Activated CD4-positive, alpha-beta memory T cell treated with anti-CD3 and anti-CD28 coated beads, Interleukin-2, amount 10 ng/mL, durations not matched to agents 7 days and 5 days (primary cell): ENCODE measurements at regions of chr21 and their contacts with region 1.

Region 1: DNA sequence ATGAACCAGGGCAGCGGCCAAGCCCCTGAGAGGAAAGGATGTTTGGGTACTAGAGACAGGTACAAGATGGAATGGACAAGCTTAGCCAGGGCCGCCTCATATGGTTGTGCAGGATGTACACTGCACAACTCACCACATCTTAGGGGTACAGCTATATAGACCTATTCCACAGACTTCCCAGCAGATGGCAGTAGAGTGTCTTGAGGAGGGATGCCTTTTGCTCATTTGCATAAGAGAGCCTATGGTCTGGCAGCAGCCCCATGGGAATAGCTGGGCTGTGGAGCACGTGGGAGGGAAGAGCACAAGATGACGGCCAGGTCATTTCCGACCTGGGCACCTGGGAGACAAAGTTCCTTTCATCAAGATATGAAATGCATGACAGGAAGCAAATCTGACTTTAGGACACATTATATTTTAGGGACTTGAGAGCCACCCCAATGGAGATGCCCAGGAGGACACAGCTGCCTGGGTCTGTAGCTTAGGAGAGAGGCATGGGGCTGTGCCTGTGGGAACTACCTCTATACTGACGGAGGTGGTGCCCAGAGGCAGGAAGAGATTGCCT is 215.5 kb downstream of the KCNJ6 start:
- DNase-seq: peak; percentile 16
- H3K4me3 Mint-ChIP-seq: no peak overlapping the region
- H3K27ac Mint-ChIP-seq: no peak overlapping the region
- H3K4me1 Mint-ChIP-seq: no peaks in the 10 kb centered on the region
- H3K27me3 Mint-ChIP-seq: peaks cover 2% of the 10 kb centered on the region

Region 2: GRCh38 chr21:37546949-37547614 is 153.6 kb before region 1 on chr21:
- CTCF ChIA-PET with region 1: no interaction called
- POLR2A ChIA-PET with region 1: no interaction called
- DNase-seq: no peak
- H3K4me3 Mint-ChIP-seq: no peak overlapping the region
- H3K27ac Mint-ChIP-seq: no peak overlapping the region
- H3K4me1 Mint-ChIP-seq: peaks cover 2% of the 10 kb centered on the region
- H3K27me3 Mint-ChIP-seq: peaks cover 18% of the 10 kb centered on the region

Region 3: DNA sequence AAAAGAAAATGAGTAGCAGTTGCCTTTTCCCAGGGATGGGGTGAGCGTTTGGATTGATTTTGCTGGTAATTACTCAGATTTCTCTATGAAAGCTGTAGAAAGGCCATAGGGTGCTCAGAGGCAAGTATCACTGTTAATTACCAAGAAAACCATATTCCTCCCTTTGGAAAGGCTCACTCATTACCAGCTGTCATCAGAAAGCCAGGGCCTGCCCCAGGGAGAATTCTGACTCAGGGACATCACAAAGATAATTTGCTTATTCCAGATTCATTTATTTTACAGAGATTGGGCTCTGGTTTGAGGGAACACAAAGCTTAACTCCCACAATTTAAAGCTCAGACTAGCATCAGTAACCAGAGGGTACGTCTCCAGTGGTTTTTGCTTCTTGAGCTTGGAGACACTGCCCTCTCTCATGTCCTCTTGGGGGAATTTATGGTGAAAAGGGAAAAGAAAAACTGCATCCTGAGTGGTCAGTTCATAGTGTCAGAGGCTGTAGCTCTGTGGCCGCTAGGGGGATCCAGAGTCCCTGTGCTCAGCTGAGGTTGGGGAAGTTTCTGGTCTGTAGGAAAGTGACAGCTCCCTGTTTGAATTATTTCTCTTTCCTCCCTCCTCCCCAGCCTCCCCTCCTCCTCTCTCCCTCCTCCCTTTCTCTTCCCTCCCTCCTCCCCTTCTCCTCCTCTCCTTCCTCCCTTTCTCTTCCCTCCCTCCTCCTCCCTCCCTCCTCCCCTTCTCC is 11.3 kb after region 1 on chr21:
- CTCF ChIA-PET with region 1: interaction called, 10 read pairs
- POLR2A ChIA-PET with region 1: no interaction called
- DNase-seq: peak; percentile 36
- H3K4me3 Mint-ChIP-seq: no peak overlapping the region
- H3K27ac Mint-ChIP-seq: no peak overlapping the region
- H3K4me1 Mint-ChIP-seq: no peaks in the 10 kb centered on the region
- H3K27me3 Mint-ChIP-seq: peaks cover 5% of the 10 kb centered on the region